HCT116 (cell line): ENCODE measurements at regions of chr22 and their contacts with region 1.

Region 1: DNA sequence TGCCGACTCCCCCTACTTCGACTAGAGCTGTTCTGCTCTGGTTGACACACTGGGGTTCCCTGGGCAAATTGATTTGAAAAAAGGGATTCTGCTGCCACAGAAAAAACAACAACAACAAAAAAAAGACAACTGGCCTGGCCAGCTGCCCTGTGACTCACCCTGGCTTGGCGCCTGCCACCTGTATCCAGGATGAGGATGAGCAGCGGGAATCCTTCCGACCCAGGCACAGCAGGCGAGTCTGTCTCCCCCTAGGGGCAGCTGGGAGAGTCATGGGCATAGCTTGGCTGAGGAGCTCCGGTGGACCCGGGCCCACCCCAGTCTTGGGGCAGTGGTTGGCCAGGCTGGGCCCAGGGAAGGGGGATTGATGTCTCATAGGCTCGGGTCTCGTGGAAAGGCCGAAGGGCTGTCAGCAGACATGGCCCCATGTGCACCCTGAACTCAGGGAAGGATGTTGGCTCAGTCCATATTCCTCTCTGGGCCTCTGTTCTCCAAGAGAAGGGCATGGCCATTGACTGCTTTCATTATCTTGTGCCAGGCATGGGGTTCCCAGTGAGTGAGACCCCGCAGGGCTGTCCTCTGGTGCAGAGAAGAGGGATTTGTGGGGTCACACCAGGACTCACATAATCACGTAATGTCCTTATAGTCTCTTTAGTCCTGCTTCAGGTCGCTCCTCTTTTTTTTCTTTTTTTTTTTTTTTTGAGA is 10.4 kb upstream of the SUN2 start:
- DNase-seq: peak; percentile 79
- ATAC-seq: peak; percentile 89
- H3K4me3 ChIP-seq: no peak overlapping the region
- H3K27ac ChIP-seq: peak overlapping the region; percentile 52; the same call in 1 of the 2 replicates
- H3K4me1 ChIP-seq: peaks cover 26 to 37% of the 10 kb centered on the region in 2 experiments
- H3K27me3 ChIP-seq: no peaks in the 10 kb centered on the region
- CTCF ChIP-seq: peak; percentile 73 to 98 (median 93)
- POLR2A ChIP-seq: no peak
- RAD21 ChIP-seq: peak; percentile 82

Region 2: DNA sequence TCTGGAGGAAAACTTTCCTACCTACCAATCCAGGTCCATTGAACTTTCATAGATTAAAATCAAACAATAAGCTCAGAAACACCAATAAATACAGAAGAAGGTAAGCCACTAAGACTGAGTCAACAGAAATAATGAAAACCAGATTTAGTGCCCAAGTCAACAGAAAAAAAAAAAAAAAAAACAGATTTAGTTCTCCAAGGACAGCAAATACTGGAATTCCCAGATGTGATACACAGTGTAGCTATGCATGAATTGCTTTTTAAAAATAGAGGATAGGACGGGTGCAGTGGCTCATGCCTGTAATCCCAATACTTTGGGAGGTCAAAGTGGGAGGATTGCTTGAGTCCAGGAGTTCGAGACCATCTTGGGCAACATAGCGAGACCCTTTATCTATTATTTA is 211.9 kb before region 1 on chr22:
- CTCF ChIA-PET with region 1: no interaction called
- POLR2A ChIA-PET with region 1: no interaction called
- RAD21 ChIA-PET with region 1: no interaction called
- intact Hi-C with region 1: no loop called
- DNase-seq: no peak
- ATAC-seq: no peak
- H3K4me3 ChIP-seq: no peak overlapping the region
- H3K27ac ChIP-seq: no peak overlapping the region
- H3K4me1 ChIP-seq: peaks cover 1 to 2% of the 10 kb centered on the region in 2 experiments; a peak in 2 of 4 replicates
- H3K27me3 ChIP-seq: no peaks in the 10 kb centered on the region
- CTCF ChIP-seq: no peak
- POLR2A ChIP-seq: no peak
- RAD21 ChIP-seq: no peak

Region 3: DNA sequence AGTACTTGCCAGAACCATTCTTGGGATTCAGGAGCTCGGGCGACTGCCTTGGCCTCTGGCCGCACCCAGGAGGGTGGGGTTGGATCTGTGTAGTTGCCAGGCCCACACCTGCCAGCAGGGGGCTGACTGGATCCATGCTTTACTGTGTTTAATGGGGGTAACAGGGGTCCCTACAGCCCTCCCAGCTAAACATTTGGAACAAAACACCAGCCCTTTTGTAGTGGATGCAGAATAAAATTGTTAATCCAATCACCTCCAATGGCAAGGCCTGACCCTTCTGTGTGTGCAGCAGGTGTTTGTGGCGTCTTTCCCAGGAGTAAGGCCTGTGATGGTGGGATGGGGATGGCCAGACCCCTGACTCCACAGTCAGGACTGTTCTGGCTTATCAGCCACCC is 32.9 kb before region 1 on chr22:
- CTCF ChIA-PET with region 1: interaction called, 10 read pairs
- POLR2A ChIA-PET with region 1: no interaction called
- RAD21 ChIA-PET with region 1: interaction called in 1 of 2 experiments, 3 read pairs
- intact Hi-C with region 1: no loop called
- DNase-seq: no peak
- ATAC-seq: peak; percentile 80
- H3K4me3 ChIP-seq: no peak overlapping the region
- H3K27ac ChIP-seq: no peak overlapping the region
- H3K4me1 ChIP-seq: peaks cover 0 to 4% of the 10 kb centered on the region in 2 experiments; a peak in 1 of 4 replicates
- H3K27me3 ChIP-seq: no peaks in the 10 kb centered on the region
- CTCF ChIP-seq: peak; percentile 55 to 92 (median 86); a peak in 5 of 6 replicates
- POLR2A ChIP-seq: no peak
- RAD21 ChIP-seq: peak; percentile 69

Region 4: DNA sequence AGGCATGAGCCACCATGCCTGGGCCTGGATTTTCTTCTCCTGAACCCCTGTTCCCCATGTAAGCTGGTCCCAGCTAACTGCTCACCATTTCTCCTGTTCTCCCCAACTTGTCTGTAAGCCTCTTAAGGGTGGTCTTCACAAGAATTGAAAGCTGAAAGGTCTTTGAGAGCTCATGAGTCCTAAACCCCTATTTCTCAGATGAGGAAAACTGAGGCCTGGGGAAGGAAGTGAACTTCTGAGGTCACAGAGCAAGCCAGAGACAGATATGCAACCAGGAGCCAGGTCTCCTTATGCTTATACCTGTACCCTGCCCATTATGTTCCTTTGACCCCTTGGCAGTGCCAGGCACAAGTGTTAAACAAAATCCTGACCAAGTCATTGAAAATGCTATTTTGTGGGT is 61.3 kb after region 1 on chr22:
- CTCF ChIA-PET with region 1: no interaction called
- POLR2A ChIA-PET with region 1: no interaction called
- RAD21 ChIA-PET with region 1: no interaction called
- intact Hi-C with region 1: no loop called
- DNase-seq: no peak
- ATAC-seq: no peak
- H3K4me3 ChIP-seq: no peak overlapping the region
- H3K27ac ChIP-seq: no peak overlapping the region
- H3K4me1 ChIP-seq: peaks cover 5 to 15% of the 10 kb centered on the region in 2 experiments
- H3K27me3 ChIP-seq: no peaks in the 10 kb centered on the region
- CTCF ChIP-seq: no peak
- POLR2A ChIP-seq: no peak
- RAD21 ChIP-seq: no peak

Region 5: DNA sequence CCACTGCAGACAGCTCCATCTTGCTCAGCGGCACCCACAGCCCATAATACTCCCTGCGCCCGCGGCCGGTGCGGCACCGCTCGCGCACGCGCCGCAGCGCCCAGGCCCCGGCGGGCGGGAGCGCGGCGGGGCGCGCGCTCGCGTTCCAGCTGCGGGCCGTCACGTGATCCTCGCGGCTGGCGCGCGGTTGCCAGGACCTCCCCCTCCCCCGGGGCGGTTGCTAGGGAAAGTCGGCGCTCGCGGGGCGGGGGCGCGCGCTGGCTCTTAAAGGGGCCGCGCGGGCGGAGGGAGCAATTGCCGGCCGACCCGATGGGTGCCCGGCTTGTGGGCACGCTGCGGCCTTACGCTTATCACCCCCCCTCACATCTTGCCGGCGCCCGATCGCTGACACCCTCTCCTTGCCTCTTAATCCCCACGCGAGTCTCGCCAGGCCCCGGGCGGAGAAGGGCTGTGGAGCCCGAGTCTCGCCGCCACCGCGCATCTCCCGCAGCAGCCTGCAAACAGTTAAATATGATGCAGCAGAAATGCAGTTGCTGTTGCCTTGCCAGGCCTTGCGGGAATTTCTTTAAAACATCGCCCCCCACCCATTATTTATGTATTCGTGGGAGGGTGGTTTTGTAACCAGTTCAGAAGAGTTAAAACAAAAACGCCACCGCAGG is 106.1 kb after region 1 on chr22 and contains the start of gene CBX6:
- CTCF ChIA-PET with region 1: interaction called, 26 read pairs
- POLR2A ChIA-PET with region 1: no interaction called
- RAD21 ChIA-PET with region 1: interaction called, 4 to 5 read pairs
- intact Hi-C with region 1: loop called (anchors 2 kb)
- DNase-seq: peak; percentile 78
- ATAC-seq: peak; percentile 76
- H3K4me3 ChIP-seq: peak within 1 kb of the TSS; percentile 61 to 86
- H3K27ac ChIP-seq: peak within 1 kb of the TSS; percentile 84
- H3K4me1 ChIP-seq: peaks cover 11 to 45% of the 10 kb centered on the region in 2 experiments
- H3K27me3 ChIP-seq: no peaks in the 10 kb centered on the region
- CTCF ChIP-seq: no peak
- POLR2A ChIP-seq: no peak
- RAD21 ChIP-seq: no peak
- total RNA-seq, gene CBX6: 90.0 TPM

Region 6: DNA sequence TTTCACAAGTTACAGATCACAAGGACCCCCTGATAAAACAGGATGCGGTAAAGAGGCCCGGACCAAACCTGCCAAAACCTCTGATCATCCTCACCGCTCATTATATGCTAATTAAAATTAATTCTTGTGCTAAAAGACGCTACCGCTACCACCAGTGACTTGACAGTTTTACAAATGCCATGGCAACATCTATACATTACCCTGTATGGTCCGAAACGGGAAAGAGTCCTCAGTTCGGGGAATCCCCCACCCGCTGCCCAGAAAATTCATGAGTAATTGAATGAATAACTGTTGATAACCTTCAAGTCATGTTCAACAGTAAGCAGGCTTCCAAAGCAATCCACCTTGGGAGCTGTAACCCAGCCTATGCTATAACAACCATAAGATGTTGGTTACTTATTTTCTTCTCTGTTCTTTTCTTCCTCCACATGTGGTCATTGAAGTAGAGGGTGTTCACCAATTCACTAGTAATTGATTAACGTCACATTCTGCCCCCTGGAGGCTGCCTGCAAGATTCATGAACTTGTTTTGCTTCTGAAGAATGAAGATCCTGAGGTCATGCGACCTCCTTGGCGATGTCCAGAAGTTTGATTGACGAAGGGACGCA is 351.5 kb after region 1 on chr22:
- CTCF ChIA-PET with region 1: interaction called, 14 read pairs
- POLR2A ChIA-PET with region 1: no interaction called
- RAD21 ChIA-PET with region 1: interaction called in 1 of 2 experiments, 4 read pairs
- intact Hi-C with region 1: loop called (anchors 2 kb)
- DNase-seq: peak; percentile 53
- ATAC-seq: peak; percentile 76
- H3K4me3 ChIP-seq: no peak overlapping the region
- H3K27ac ChIP-seq: no peak overlapping the region
- H3K4me1 ChIP-seq: no peaks in the 10 kb centered on the region
- H3K27me3 ChIP-seq: no peaks in the 10 kb centered on the region
- CTCF ChIP-seq: peak; percentile 65 to 80 (median 75)
- POLR2A ChIP-seq: no peak
- RAD21 ChIP-seq: peak; percentile 84